GM13977 (cell line): ENCODE measurements at regions of chr11 and their contacts with region 1.

Region 1: GRCh38 chr11:82229341-82229740 is 504.3 kb downstream of the FAM181B start:
- DNase-seq: peak; percentile 2
- CTCF ChIP-seq: peak; percentile 55

Region 2: GRCh38 chr11:81644239-81644840 is 585.0 kb before region 1 on chr11:
- in situ Hi-C with region 1: loop called (anchors 25 kb)
- DNase-seq: peak; percentile 24
- CTCF ChIP-seq: peak; percentile 62

Region 3: GRCh38 chr11:82303671-82304070 is 74.3 kb after region 1 on chr11:
- in situ Hi-C with region 1: no loop called
- DNase-seq: no peak
- CTCF ChIP-seq: no peak